Right ventricle myocardium inferior (tissue), 1 donor: ENCODE measurements at regions of chr1 and their contacts with region 1.

Region 1: DNA sequence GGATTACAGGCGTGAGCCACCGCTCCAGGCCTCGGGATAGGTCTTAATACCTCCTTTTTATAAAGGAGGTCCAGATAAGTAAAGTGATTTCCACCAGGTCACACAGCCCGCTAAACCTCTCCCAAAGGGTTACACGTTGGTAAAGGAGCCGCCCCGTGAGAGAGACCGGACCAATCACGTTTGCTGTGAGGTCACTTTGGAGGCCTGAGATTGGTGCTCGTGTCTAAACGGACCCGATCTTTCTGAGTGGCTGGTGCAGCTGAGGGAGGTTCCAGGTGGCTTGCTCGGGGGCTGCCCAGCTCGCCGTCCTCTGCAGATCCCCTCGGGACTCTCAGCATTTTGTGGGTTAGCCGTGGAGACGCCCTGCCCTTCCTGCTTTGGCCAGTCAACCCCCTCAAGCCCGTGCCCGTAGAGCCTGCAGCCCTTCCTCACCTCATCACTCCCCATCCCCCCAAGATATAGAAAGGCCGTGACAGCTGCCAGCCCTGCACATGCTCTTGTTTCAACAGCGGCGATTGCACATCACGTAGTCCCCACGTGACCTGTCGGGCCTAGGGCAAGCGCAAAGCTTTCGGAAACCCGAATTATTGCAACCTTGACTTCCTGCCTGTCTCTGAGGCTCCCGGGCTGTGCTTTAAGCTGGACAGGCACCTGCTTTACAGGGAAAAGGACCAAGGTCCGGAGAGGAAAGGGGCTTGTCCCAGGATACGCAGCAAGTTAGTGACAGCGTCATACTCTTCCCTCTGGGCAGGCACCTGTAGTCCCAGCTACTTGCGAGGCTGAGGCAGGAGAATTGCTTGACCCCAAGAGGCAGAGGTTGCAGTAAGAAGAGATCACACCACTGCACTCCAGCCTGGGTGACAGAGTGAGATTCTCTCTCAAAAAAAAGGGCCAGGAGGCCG is 5.0 kb upstream of the COA7 start:
- DNase-seq: peak; percentile 94
- ATAC-seq: peak; percentile 90

Region 2: DNA sequence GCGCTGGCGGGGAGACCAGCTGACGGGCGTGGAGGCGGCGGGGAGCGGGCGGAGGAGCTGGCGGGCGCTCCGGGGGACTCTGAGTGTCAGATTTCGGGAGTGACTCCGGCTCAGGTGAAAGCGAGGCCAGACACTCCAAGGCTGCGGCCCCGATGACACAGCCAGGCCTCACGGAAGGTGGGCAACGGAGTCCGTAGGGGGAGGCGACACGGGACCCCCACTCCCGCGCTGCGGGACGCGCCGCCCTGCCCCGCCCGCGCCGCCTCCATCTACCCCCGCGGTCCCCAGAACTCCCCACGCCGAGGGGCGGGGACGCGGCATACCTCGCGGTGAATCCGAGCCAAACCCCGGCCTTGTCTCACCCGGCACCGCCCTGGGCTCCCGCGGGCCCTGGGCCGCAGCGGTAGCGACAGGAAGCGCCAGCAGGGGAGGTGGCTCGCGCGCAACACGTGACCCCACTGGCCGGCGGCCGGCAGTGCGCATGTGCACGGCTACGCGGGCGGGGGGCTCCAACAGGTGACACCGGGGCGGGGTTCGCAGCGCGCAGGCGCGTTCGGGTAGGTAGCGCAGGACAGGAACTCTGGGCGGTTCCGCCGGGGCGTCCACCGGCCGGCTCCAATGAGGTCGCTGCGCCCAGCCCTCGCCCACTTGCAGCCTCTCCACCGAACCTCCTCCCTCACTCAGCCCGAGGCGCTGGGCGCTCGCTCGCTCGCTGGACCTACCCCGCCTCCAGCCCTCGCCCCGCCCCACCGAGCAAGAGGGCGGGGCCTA is 337.2 kb before region 1 on chr1 and contains the start of gene CC2D1B:
- intact Hi-C with region 1: loop called (anchors 5 kb)
- DNase-seq: peak; percentile 99
- ATAC-seq: peak; percentile 96
- total RNA-seq, gene CC2D1B: 14.1 TPM

Region 3: DNA sequence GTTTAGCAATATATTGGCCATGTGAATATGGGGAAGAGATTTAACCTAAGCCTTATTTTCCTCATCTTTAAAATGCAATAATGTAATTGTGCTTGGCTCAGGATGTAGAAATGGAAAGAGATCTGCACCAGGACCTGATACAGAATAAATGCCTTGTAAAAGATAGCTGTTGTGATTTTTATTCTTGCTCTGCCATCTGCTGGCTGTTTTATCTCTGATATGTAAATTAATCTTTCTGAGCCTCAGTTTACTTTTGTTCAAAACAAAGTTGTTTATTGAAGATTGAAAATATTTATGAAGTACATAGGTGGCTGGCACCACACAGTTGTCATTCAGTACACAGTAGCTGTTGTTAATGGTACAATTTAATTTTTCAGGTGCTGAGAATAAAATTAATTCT is 45.0 kb after region 1 on chr1:
- intact Hi-C with region 1: loop called (anchors 5 kb)
- DNase-seq: no peak
- ATAC-seq: no peak

Region 4: GRCh38 chr1:52792036-52792435 is 88.9 kb after region 1 on chr1:
- intact Hi-C with region 1: no loop called
- DNase-seq: no peak
- ATAC-seq: no peak

Region 5: GRCh38 chr1:52927212-52928014 is 224.3 kb after region 1 on chr1 and contains the start of gene SCP2:
- intact Hi-C with region 1: loop called (anchors 2 kb)
- DNase-seq: peak; percentile 93
- ATAC-seq: peak; percentile 96
- total RNA-seq, gene SCP2: 132 TPM

Region 6: DNA sequence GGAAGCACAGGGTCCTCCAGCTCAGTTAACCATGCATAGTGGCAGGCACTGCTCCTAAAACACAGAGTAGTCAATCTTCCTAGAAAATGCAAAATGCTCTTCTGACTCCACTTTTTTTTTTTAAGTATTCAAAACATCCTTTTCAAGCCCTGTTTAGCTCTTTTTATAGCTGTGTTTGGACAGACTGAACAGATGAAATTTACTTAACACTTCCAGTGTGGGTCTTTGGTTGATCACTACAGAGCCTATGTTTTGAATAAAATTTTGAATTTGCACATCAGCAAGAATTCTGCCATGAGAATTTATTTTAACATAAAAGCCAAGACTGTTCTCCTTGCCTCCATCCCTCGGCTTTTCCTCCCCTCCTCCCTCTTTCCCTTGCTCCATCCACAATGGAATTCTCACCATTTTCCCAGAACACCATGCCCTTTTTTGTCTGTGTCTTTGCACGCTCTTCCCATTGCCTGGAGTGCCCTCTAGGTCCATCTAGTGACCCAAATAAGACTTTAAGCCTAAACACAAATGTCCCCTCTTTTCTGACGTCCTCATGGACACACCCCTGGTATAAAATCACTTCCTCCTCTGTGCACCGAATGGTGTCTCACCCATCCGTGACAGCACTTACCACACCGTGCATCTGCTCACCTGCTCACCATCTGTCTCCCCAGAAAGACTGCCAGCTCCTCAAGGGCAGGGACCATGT is 469.4 kb after region 1 on chr1:
- intact Hi-C with region 1: loop called (anchors 10 kb)
- DNase-seq: no peak
- ATAC-seq: peak; percentile 42